ENCODE measurements at regions of chr16 and their contacts with region 1.

Region 1: DNA sequence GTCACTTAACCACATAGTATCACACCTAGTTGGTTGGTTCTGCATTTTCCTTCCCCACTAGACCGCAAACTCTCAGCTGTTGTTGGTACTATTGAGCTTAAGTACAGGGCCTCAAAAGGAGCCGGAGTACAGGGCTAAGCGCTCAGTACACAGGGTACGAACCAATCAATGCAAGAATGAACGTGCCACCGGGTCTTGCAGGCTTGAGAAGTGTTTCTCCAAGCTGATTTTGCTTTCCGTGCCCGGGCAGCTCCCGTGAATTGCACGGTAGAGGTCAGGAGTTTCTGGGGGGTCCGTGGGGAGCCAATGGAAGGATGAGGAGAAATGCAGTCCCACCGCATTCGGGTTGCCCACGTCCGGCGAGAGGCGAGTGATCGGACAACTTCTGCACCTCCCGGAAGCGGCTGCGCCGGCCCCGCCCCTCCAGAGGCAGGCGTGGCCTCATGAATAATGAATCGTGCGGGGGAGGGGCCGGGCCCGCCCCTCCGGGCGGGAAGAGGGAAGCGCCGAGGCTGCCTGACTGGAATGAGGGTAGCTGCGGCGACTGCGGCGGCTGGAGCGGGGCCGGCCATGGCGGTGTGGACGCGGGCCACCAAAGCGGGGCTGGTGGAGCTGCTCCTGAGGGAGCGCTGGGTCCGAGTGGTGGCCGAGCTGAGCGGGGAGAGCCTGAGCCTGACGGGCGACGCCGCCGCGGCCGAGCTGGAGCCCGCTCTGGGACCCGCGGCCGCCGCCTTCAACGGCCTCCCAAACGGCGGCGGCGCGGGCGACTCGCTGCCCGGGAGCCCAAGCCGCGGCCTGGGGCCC is at the start of gene SNTB2:
- DNase-seq: peak; percentile 94 to 98 (median 97)
- H3K4me3 ChIP-seq: peak within 1 kb of the TSS; percentile 73 to 86 (median 86)
- H3K27ac ChIP-seq: peak within 1 kb of the TSS; percentile 89 to 92
- H3K4me1 ChIP-seq: peaks cover 0 to 20% (median 10%) of the 10 kb centered on the region in 3 donors
- H3K27me3 ChIP-seq: no peaks in the 10 kb centered on the region
- CTCF ChIP-seq: no peak
- total RNA-seq, gene SNTB2: 45.1 TPM

Region 2: DNA sequence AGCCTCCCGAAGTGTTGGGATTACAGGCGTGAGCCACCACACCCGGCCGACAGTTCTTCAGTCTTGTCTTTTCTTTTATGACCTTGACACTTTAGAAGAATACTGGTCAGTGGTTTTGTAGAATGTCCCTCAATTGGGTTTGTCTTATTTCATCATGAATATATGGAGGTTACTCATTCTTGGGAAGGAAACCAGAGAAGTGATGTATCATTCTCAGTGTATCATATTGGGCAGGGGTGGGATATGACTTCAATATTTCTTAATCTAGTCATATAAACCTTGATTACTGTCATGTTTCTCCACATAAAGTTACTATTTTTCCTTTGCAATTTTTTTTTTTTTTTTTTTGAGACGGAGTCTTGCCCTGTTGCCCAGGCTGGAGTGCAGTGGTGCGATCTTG is 37.0 kb after region 1 on chr16:
- intact Hi-C with region 1: loop called (anchors 5 kb)
- DNase-seq: no peak
- H3K4me3 ChIP-seq: no peak overlapping the region
- H3K27ac ChIP-seq: no peak overlapping the region
- H3K4me1 ChIP-seq: peaks cover 0 to 5% (median 0%) of the 10 kb centered on the region in 3 donors
- H3K27me3 ChIP-seq: no peaks in the 10 kb centered on the region
- CTCF ChIP-seq: no peak

Region 3: DNA sequence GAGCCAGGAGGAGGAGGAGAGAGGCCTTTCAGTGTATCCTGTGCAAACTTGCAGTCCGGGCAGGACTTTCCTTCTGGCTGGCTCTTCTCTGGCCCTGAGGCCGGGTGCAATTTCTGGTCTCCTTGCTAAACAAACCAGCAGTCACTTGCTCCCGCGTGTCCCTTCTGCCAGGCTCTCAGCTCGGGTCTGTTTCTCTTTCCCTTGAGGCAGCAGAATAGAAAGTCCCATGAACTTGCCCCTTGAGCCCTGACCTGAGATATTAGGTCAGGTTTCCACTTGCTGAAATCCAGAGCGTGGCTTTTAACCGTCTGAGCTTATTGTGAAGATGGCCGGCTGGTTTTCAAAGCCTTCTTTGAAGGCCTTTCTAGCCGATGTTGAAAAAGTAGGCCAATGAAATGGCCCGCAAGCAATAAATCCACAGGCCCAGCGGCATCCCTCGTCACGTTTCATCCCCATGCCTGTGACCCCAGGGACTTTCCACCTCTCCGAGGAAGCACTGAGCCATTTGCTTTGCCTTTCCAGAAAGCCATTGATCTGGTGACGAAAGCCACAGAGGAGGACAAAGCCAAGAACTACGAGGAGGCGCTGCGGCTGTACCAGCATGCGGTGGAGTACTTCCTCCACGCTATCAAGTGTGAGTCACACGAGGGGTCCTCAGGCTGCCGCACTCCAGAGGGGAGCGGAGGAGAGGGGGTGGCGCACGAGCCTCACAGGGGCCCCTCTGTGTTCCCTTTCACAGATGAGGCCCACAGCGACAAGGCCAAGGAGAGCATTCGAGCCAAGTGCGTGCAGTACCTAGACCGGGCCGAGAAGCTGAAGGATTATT is 128.9 kb after region 1 on chr16:
- intact Hi-C with region 1: no loop called
- DNase-seq: no peak
- H3K4me3 ChIP-seq: no peak overlapping the region
- H3K27ac ChIP-seq: no peak overlapping the region
- H3K4me1 ChIP-seq: peaks cover 0 to 7% (median 2%) of the 10 kb centered on the region in 3 donors
- H3K27me3 ChIP-seq: no peaks in the 10 kb centered on the region
- CTCF ChIP-seq: no peak

Measured in kidney (tissue), 22 donors.